BJ (cell line): ENCODE measurements at regions of chr2 and their contacts with region 1.

Region 1: DNA sequence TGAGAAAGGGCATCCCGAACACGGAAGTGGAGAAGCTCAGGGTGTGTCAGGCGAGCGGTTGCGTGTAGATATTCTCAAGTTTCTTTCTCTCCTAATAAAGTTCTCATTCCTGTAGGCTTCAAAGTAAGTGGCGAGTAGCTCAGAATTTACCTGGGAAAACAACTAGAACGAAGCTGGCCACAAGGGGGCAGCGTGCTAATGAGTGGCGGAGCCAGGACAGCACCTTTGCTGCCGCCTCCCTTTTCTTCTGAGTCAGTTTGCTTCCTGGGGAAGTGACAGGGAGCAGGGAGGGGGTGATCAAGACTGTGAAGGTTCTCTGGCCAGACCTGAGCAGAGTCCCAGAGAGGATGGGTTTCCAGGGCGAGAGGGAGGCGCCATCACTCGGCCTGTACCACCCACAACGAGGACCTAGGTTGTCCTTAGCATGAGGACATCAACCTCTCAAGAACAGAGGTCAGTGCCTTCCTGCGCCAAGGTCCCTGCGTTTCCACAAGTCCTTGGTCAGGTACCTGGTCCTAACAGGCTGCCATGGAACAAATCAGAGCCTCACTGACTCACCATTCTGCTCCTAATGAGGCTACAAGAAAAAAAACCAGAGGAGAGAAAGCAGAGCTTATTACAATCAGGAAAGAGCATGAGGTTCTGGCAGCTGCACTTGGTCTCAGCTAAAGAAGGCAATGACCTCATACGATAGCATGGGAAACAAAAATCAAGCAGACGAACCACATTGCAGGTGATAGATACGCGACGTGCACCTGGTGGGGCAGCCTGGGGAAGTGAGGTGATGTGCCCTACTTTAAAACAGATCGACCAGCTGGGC is 98.6 kb downstream of the PLB1 start:
- DNase-seq: peak; percentile 17
- H3K4me3 ChIP-seq: no peak overlapping the region
- H3K27me3 ChIP-seq: no peaks in the 10 kb centered on the region
- CTCF ChIP-seq: peak; percentile 80

Region 2: GRCh38 chr2:28577791-28578680 is 16.5 kb before region 1 on chr2:
- CTCF ChIA-PET with region 1: interaction called, 13 read pairs
- POLR2A ChIA-PET with region 1: no interaction called
- DNase-seq: no peak
- H3K4me3 ChIP-seq: no peak overlapping the region
- H3K27me3 ChIP-seq: no peaks in the 10 kb centered on the region
- CTCF ChIP-seq: no peak

Region 3: DNA sequence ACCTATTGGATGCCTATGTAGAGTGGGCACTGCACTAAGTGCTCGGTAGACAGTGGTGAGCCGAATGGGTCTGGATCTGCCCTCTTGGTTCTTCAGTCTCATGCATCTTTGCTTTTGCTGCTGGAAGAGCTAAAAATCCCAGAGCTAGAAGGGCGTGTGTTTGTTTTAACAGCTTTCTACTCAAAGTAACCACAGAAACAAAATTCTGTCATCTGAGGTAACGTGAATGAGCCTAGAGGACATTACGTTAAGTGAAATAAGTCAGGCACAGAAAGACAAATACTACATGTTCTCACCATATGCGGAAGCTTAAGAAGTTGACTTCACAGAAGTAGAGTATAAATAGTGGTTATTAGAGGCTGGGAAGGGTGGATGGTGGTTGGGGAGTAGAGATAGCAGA is 21.2 kb after region 1 on chr2:
- CTCF ChIA-PET with region 1: interaction called, 25 read pairs
- POLR2A ChIA-PET with region 1: interaction called, 14 read pairs
- DNase-seq: no peak
- H3K4me3 ChIP-seq: no peak overlapping the region
- H3K27me3 ChIP-seq: peaks cover 3% of the 10 kb centered on the region; the same call in 1 of the 2 replicates
- CTCF ChIP-seq: no peak

Region 4: DNA sequence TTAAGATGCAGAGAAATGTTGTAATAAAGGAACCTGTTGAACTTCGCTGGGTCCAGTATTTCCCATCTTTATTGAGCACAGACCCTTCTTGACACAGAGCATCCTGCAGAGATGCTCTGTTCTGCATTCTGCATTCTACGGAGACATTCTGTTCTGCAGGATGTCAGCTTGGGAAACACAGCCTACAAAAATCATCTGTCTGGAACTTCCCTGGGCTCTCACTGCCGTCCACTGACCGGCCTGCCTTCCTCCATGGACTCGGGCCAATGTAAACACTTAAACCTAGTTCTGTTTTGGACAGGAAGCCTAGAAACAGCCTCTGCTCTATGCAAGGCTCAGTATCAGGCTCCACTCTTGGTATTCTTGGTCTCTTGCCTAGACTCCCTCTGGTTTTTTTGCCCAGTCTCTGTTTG is 67.1 kb after region 1 on chr2:
- CTCF ChIA-PET with region 1: interaction called, 38 read pairs
- POLR2A ChIA-PET with region 1: no interaction called
- DNase-seq: peak; percentile 26
- H3K4me3 ChIP-seq: no peak overlapping the region
- H3K27me3 ChIP-seq: no peaks in the 10 kb centered on the region
- CTCF ChIP-seq: no peak

Region 5: GRCh38 chr2:28717339-28717758 is 122.8 kb after region 1 on chr2:
- CTCF ChIA-PET with region 1: no interaction called
- POLR2A ChIA-PET with region 1: no interaction called
- DNase-seq: no peak
- H3K4me3 ChIP-seq: no peak overlapping the region
- H3K27me3 ChIP-seq: no peaks in the 10 kb centered on the region
- CTCF ChIP-seq: no peak

Region 6: DNA sequence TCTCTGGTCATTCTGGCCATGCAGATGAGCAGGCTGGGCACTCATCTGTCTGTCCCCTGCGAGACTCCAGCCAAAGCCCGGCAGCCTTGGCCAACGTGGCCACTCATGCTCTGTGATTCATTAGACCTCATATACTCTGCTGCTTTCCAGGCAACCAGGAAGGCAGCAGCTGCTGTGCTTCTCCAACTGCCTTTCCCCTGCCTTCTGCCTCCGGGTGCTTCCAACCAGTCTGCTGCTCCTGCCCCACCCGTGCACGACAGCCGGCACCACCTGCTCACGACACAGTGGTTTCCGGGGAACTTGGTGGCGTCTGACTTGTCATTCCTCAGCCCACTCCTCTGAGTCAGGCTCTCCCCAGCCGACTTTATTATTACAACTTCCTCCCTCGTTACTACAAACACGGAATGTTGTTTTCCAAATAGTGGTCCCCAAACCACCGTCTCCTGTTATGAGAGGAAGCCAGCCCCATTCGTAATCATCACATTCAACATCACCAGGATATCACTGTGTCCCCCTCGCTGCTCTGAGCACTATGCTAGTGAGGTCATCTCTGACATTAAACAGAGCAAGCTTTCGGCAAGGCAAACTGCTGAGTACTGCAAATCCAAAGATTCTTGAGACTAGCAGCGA is 934.5 kb after region 1 on chr2:
- CTCF ChIA-PET with region 1: no interaction called
- POLR2A ChIA-PET with region 1: no interaction called
- DNase-seq: peak; percentile 55
- H3K4me3 ChIP-seq: no peak overlapping the region
- H3K27me3 ChIP-seq: no peaks in the 10 kb centered on the region
- CTCF ChIP-seq: no peak